Right ventricle myocardium inferior (tissue), 1 donor: ENCODE measurements at regions of chr12 and their contacts with region 1.

Region 1: DNA sequence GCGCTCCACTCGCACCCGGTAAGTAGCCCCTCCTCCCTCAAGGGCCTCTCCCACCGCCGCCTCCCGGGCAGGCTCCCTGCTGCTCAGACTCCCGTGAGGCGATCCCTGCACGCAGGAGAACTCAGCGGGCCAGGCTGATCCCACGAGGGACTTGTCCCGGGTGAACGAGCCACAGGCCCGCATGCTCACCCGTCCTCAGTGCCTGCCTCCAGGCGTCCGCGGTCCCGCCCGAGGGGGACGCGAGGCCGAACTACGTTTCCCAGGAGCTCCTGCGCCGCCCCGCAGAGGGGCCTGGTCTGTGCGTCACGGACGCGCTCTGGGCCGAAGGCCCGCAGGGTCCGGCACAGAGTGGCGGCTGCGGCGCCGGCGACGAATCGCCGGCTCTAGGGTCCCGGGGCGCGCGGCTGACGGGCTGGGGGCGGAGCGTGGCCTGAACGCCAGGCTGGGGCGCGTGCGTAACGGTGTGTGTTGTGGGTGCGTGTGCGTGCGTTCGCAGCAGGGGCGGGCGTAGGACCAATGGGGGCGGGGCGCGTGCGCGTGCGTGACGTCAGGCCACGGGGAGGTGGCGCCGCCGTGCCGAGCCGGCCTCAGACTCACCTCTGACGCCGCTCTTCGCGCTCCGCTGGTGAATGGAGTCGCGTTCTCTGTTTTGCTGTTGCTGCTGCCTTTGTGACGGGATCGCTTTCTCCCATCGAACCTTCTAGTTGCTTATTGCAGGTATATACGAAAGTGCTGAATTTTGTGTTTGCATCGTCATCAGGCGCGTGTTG is at the starts of genes ZNF10 and ZNF891:
- DNase-seq: peak; percentile 99
- ATAC-seq: peak; percentile 98
- total RNA-seq, gene ZNF10: 5.4 TPM
- total RNA-seq, gene ZNF891: 1.2 TPM

Region 2: GRCh38 chr12:132812631-132813305 is 317.5 kb before region 1 on chr12:
- intact Hi-C with region 1: no loop called
- DNase-seq: no peak
- ATAC-seq: no peak

Region 3: DNA sequence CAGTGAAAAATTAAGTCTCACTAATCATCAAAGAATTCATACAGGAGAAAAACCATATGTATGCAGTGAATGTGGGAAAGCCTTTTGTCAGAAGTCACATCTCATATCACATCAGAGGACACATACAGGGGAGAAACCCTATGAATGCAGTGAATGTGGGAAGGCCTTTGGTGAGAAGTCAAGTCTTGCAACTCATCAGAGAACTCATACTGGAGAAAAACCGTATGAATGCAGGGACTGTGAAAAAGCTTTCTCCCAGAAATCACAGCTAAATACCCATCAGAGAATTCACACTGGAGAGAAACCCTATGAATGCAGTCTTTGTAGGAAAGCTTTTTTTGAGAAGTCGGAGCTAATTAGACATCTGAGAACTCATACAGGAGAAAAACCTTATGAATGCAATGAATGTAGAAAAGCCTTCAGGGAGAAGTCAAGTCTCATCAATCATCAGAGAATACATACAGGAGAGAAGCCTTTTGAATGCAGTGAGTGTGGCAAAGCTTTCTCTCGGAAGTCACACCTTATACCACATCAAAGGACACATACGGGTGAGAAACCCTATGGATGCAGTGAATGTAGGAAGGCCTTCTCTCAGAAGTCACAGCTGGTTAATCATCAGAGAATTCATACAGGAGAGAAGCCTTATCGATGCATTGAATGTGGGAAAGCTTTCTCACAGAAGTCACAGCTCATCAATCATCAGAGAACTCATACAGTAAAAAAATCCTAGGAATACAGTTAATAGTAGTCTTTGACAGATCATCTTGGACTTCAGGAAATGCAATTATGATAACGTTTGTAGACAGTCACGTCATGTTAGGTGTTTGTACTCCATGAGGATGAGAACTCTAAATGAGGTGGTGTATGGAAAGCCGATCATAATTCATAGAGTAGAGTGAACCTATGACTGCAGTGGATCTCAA is 71.8 kb before region 1 on chr12:
- intact Hi-C with region 1: no loop called
- DNase-seq: no peak
- ATAC-seq: no peak

Region 4: GRCh38 chr12:133073836-133074235 is 56.4 kb before region 1 on chr12:
- intact Hi-C with region 1: no loop called
- DNase-seq: no peak
- ATAC-seq: no peak

Region 5: GRCh38 chr12:133181238-133181959 is 51.2 kb after region 1 on chr12 and contains the start of gene ZNF268:
- intact Hi-C with region 1: loop called (anchors 1 kb)
- DNase-seq: peak; percentile 94
- ATAC-seq: peak; percentile 98
- total RNA-seq, gene ZNF268: 6.8 TPM